Dorsolateral prefrontal cortex (tissue), 120 donors: ENCODE measurements at regions of chr5 and their contacts with region 1.

Region 1: GRCh38 chr5:90409318-90410177 is at the start of gene CETN3:
- DNase-seq: peak; percentile 91 to 98 (median 95)
- H3K4me3 ChIP-seq: peak within 1 kb of the TSS; percentile 63 to 99 (median 87)
- H3K27ac ChIP-seq: peak within 1 kb of the TSS; percentile 87 to 100 (median 98)
- H3K27me3 ChIP-seq: no peaks in the 10 kb centered on the region
- CTCF ChIP-seq: peak in 32 of 56 donors; percentile 3 to 56 (median 32)
- total RNA-seq, gene CETN3: 14.6 to 37.6 (median 23.5) TPM

Region 2: GRCh38 chr5:88690409-88691229 is 1718.9 kb before region 1 on chr5:
- intact Hi-C with region 1: loop called in 1 of 2 experiments (anchors 5 kb)
- DNase-seq: peak; percentile 77 to 95 (median 90)
- H3K4me3 ChIP-seq: peak overlapping the region; percentile 46 to 93 (median 70)
- H3K27ac ChIP-seq: peak overlapping the region; percentile 61 to 100 (median 99)
- H3K27me3 ChIP-seq: peaks cover 0 to 13% (median 0%) of the 10 kb centered on the region in 45 donors
- CTCF ChIP-seq: peak; percentile 85 to 99 (median 96)

Region 3: GRCh38 chr5:90264689-90265544 is 144.6 kb before region 1 on chr5:
- intact Hi-C with region 1: loop called in 1 of 2 experiments (anchors 10 kb)
- DNase-seq: peak; percentile 43 to 84 (median 66)
- H3K4me3 ChIP-seq: peak overlapping the region in 29 of 59 donors; percentile 1 to 50 (median 21)
- H3K27ac ChIP-seq: peak overlapping the region in 34 of 59 donors; percentile 0 to 76 (median 23)
- H3K27me3 ChIP-seq: no peaks in the 10 kb centered on the region
- CTCF ChIP-seq: peak; percentile 77 to 98 (median 92)

Region 4: DNA sequence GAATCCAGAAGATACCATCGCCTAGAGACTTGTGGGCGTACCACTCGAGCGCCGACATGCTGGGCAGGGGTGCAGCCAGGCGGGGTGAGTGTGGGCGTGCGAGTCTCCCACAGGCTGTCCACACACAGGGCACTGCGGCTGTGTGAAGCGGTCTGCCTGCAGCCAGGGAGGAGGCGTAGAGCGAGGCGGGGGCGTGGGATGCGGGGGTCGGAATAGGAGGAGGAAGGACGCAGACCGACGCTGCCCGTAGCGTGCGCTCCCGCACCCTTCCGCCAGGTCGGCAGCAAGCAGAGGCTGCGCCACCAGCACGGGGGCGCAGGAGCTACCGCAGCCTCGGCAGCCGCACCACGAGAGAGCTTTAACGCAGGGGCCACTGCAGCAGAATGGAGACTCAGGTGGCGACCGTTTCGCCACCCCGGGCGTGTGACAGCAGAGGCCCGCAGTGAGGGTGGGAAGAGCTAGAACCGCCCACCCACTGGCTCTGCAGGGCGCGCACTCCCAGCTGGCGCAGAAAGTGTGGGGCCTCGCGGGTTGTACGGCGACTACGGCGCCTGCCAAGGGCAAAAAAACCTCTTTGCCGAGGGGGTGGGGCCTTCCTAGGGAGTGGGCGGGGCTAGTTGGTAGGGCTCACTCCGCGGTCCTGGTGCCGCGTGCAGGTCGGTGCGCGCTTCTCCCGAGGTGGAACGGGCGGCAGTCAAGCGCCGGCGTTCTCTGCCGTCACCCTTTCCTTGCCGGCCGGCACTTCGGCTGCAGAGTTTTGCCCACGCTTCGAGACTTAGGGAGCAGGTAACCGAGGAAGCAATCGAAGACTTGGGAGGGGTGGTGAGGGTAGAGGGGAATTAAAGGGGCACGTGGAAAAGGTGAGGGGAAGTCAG is 64.9 kb after region 1 on chr5 and contains the starts of genes MBLAC2 and POLR3G:
- intact Hi-C with region 1: loop called (anchors 5 kb)
- DNase-seq: peak; percentile 80 to 94 (median 90)
- H3K4me3 ChIP-seq: peak within 1 kb of the TSS; percentile 52 to 98 (median 89)
- H3K27ac ChIP-seq: peak within 1 kb of the TSS; percentile 32 to 96 (median 90)
- H3K27me3 ChIP-seq: no peaks in the 10 kb centered on the region
- CTCF ChIP-seq: peak in 54 of 56 donors; percentile 10 to 72 (median 52)
- total RNA-seq, gene MBLAC2: 9.0 to 18.7 (median 13.8) TPM
- total RNA-seq, gene POLR3G: 3.8 to 12.6 (median 7.0) TPM

Region 5: DNA sequence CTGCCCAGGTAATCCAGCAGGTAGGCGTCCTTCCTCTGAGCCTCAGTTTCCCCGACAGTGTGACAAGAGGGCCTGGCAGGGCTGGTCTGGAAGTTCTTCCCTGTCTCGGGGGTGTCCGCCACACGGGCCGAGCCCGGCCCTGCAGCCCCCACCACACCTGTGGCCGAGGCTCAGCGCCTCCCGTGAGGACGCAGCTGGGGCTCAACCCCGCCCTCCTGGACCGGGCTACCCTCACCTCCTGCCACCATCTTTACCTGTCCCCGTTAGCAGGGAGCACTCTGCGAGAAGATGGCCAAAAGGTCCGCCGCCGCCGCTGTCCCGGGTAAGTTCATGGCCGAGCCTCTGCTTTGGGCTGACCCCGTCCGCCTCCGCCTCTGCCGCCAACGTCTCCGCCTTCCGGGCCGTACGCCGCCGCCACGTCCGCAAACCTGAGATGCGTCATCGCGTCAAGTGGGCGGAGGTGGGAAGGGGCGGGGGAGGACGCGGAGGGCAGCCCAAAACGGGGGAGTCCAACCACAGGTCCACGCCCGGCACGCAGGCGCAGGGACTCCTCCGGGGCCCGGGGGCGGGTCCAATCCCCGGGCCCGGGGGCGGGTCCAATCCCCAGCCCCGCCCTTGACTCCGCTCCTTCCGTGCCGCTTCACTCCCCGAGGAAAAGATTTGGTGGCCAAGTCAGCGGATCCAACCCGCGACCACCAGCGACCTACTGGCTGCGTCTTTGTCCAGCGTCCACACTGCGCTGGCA is 119.8 kb after region 1 on chr5 and contains the start of gene LYSMD3:
- intact Hi-C with region 1: loop called in 1 of 2 experiments (anchors 10 kb)
- DNase-seq: peak; percentile 90 to 99 (median 94)
- H3K4me3 ChIP-seq: peak within 1 kb of the TSS; percentile 63 to 99 (median 90)
- H3K27ac ChIP-seq: peak within 1 kb of the TSS; percentile 74 to 100 (median 97)
- H3K27me3 ChIP-seq: no peaks in the 10 kb centered on the region
- CTCF ChIP-seq: peak in 1 of 56 donors; percentile 7
- total RNA-seq, gene LYSMD3: 8.2 to 18.0 (median 13.0) TPM